ENCODE measurements at regions of chr15 and their contacts with region 1.

Region 1: DNA sequence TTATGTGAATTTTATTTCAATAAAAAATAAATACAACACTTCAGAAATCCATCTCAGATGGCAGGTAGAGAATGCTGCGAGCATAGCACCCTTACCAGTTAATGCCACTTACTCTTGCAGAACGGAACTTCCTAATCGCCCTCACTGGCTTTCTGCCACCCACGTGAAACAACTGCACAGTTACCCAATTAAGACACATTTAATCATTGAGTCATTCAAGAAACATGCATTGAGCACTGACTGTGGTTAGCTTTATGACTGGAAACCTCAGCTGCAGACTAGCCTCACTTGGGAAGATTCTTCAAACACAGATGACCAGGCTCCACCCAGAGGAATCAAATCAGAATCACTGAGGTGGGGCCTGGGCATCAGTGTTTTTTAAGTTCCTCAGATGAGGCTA is 5.6 kb upstream of the MFGE8 start:
- DNase-seq: peak; percentile 99
- ATAC-seq: peak; percentile 96
- H3K4me3 ChIP-seq: no peak overlapping the region
- H3K27ac ChIP-seq: peak overlapping the region; percentile 39; the same call in 1 of the 2 replicates
- H3K4me1 ChIP-seq: peaks cover 8% of the 10 kb centered on the region
- H3K27me3 ChIP-seq: no peaks in the 10 kb centered on the region
- CTCF ChIP-seq: no peak
- POLR2A ChIP-seq: no peak
- RAD21 ChIP-seq: no peak

Region 2: GRCh38 chr15:88932271-88932874 is 13.6 kb after region 1 on chr15:
- CTCF ChIA-PET with region 1: no interaction called
- POLR2A ChIA-PET with region 1: interaction called, 11 read pairs
- dilution Hi-C with region 1: no loop called
- in situ Hi-C with region 1: no loop called
- intact Hi-C with region 1: no loop called
- DNase-seq: no peak
- ATAC-seq: peak; percentile 35; the same call in 1 of the 2 replicates
- H3K4me3 ChIP-seq: no peak overlapping the region
- H3K27ac ChIP-seq: no peak overlapping the region
- H3K4me1 ChIP-seq: peaks cover 4% of the 10 kb centered on the region
- H3K27me3 ChIP-seq: no peaks in the 10 kb centered on the region
- CTCF ChIP-seq: no peak
- POLR2A ChIP-seq: no peak
- RAD21 ChIP-seq: no peak

Region 3: DNA sequence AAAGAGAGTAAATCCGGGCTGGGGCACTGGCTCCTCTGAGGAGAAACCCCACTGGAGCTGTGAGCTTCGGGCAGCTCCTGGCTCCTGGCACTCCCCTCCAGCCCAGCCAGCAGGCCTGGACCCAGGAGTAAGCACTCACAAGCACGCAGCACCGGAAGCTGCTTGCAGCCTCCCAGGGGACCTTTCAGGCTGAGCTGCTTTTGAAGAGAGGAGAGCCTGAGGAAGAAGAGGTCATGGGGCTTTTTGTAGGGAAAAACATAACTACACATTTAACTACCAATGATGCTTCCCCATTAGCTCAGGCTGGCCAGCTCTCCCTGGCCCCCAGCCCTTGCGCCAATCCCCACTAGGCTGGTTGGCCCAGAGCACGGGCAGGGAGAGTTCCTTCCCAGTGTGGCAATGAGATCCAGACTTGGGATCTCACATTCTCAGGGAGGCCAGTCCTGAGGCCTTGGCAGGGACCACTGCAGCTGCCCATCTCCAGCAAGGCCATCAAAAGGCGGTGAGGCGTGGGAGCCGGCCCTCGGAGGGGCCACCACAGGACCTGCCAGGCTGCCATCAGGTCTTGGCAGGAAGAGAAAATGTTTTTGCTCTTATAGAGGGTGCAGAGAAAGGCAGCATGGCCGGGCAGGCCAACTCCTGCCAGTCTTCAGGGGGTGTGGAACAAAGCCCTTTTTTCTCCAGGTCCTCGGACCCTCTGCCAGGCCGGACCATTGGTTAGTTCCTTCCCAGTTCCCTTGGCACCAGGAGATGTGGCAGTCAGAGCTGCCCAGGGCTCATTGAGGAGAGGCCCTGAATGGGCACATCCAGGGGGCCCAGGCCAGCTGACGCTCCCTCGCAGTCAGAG is 35.9 kb after region 1 on chr15:
- CTCF ChIA-PET with region 1: no interaction called
- POLR2A ChIA-PET with region 1: no interaction called
- dilution Hi-C with region 1: no loop called
- in situ Hi-C with region 1: no loop called
- intact Hi-C with region 1: no loop called
- DNase-seq: no peak
- ATAC-seq: peak; percentile 88
- H3K4me3 ChIP-seq: no peak overlapping the region
- H3K27ac ChIP-seq: no peak overlapping the region
- H3K4me1 ChIP-seq: peaks cover 2% of the 10 kb centered on the region; the same call in 1 of the 2 replicates
- H3K27me3 ChIP-seq: no peaks in the 10 kb centered on the region
- CTCF ChIP-seq: no peak
- POLR2A ChIP-seq: no peak
- RAD21 ChIP-seq: no peak

Region 4: DNA sequence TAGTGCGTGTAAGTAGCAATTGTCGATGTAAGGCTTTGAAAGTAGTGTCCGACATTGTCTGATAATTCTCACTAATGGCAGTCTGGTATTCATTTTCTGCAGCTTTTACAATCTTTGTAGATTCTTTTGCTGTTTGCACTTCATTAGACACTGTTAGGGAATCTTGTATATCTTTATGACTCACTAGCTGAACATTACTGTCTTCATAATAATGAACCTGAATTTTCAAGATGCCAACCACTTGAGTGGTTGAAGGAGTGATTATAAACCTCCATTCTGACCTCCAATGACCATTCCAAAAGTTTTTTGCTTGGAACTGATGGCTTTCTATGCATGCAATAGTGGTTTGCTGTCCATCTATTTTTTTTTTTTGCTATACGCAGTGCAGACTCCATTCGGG is 70.8 kb after region 1 on chr15:
- CTCF ChIA-PET with region 1: no interaction called
- POLR2A ChIA-PET with region 1: interaction called, 3 read pairs
- dilution Hi-C with region 1: no loop called
- in situ Hi-C with region 1: no loop called
- intact Hi-C with region 1: loop called (anchors 2 kb)
- DNase-seq: peak; percentile 94
- ATAC-seq: peak; percentile 77
- H3K4me3 ChIP-seq: peak overlapping the region; percentile 2; the same call in 1 of the 2 replicates
- H3K27ac ChIP-seq: peak overlapping the region; percentile 92
- H3K4me1 ChIP-seq: peaks cover 28% of the 10 kb centered on the region
- H3K27me3 ChIP-seq: no peaks in the 10 kb centered on the region
- CTCF ChIP-seq: no peak
- POLR2A ChIP-seq: no peak
- RAD21 ChIP-seq: 0 out of 2 replicates have a peak, but pooled peaks have one; percentile 4

Measured in IMR-90 (cell line).